HCT116 (cell line): ENCODE measurements at regions of chr1 and their contacts with region 1.

Region 1: GRCh38 chr1:219209578-219209977 is 35.9 kb downstream of the LYPLAL1 start:
- DNase-seq: no peak
- ATAC-seq: no peak
- H3K4me3 ChIP-seq: no peak overlapping the region
- H3K27ac ChIP-seq: no peak overlapping the region
- H3K4me1 ChIP-seq: no peaks in the 10 kb centered on the region
- H3K27me3 ChIP-seq: no peaks in the 10 kb centered on the region
- CTCF ChIP-seq: no peak
- POLR2A ChIP-seq: no peak
- RAD21 ChIP-seq: no peak

Region 2: DNA sequence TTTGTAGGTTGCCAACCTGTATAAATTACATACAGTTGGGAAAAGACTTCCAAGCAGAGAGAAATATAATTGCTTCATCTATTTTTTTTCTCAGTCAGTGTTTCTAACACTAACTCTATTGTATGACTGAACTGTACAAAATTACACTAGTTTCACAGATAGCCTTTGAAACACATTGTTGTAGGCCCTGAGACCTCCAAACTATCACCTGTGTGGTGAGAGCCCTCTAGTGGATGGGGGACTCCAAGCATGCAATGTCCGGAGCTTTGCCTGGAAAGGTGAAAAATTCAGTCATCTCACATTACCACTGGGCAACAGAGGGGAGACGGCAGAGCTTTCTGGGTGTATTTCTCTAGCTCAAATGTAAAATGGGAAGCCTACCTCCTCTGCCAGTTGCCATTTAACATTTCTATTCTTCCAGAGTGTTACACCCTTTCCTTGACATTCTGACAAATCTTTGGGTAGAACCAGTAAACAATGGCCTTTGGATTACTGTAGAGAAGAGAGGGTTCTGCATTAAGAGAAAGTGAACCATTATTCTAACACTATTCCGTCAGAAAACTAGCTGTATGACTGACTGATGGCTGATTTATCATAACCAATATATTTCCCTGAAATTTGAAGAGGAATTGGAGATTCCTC is 176.3 kb after region 1 on chr1:
- CTCF ChIA-PET with region 1: no interaction called
- POLR2A ChIA-PET with region 1: no interaction called
- RAD21 ChIA-PET with region 1: no interaction called
- intact Hi-C with region 1: loop called (anchors 2 kb)
- DNase-seq: peak; percentile 41
- ATAC-seq: peak; percentile 98
- H3K4me3 ChIP-seq: no peak overlapping the region
- H3K27ac ChIP-seq: no peak overlapping the region
- H3K4me1 ChIP-seq: no peaks in the 10 kb centered on the region
- H3K27me3 ChIP-seq: no peaks in the 10 kb centered on the region
- CTCF ChIP-seq: peak; percentile 63 to 89 (median 86)
- POLR2A ChIP-seq: no peak
- RAD21 ChIP-seq: peak; percentile 85

Region 3: DNA sequence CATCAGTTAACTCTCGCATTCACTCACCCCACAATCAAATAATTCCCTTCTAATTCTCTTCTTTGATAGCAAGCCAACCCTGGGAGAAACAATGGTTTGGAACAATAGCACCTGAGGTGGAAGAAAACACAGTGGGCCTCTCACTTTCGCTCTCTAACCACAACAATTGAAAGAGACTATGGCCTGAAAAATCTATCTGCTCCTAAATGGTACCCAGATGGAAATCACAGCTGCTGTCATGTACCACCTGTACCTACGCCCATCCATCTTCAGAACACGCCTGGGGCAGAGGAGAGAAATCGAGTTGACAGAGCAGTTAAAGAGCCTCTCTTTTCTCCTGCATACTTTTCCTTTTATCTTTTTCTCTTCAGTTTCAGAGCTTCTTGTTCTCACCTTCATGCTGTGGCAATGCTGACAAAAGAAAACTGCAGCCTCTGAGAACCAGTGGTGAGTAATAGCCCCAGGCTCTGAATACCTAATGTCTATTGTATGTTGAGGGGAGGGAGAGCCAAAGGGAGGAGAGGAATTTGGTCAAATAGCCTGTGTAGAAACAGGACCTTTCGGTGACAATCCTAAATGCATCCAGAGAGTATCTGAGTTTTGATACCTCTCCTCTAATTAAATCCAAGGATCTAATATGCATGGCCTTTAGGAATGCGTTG is 345.6 kb after region 1 on chr1:
- CTCF ChIA-PET with region 1: no interaction called
- POLR2A ChIA-PET with region 1: no interaction called
- RAD21 ChIA-PET with region 1: no interaction called
- intact Hi-C with region 1: loop called (anchors 10 kb)
- DNase-seq: no peak
- ATAC-seq: no peak
- H3K4me3 ChIP-seq: no peak overlapping the region
- H3K27ac ChIP-seq: no peak overlapping the region
- H3K4me1 ChIP-seq: no peaks in the 10 kb centered on the region
- H3K27me3 ChIP-seq: no peaks in the 10 kb centered on the region
- CTCF ChIP-seq: no peak
- POLR2A ChIP-seq: no peak
- RAD21 ChIP-seq: no peak

Region 4: GRCh38 chr1:219660666-219661463 is 451.3 kb after region 1 on chr1:
- CTCF ChIA-PET with region 1: interaction called, 3 read pairs
- POLR2A ChIA-PET with region 1: no interaction called
- RAD21 ChIA-PET with region 1: no interaction called
- intact Hi-C with region 1: loop called (anchors 10 kb)
- DNase-seq: peak; percentile 87
- ATAC-seq: peak; percentile 97
- H3K4me3 ChIP-seq: peak overlapping the region in 1 of 2 experiments; percentile 23; a peak in 2 of 4 replicates
- H3K27ac ChIP-seq: no peak overlapping the region
- H3K4me1 ChIP-seq: peaks cover 4 to 6% of the 10 kb centered on the region in 2 experiments; a peak in 2 of 4 replicates
- H3K27me3 ChIP-seq: no peaks in the 10 kb centered on the region
- CTCF ChIP-seq: peak; percentile 87 to 94 (median 88)
- POLR2A ChIP-seq: no peak
- RAD21 ChIP-seq: peak; percentile 91